Natural killer cell (primary cell): ENCODE measurements at regions of chr11 and their contacts with region 1.

Region 1: GRCh38 chr11:46121724-46122477 is 647 bp upstream of the PHF21A start:
- DNase-seq: peak; percentile 67 to 91
- ATAC-seq: peak; percentile 43 to 72 (median 60)
- H3K4me3 ChIP-seq: peak overlapping the region; percentile 47
- H3K4me3 Mint-ChIP-seq: peak overlapping the region; percentile 93
- H3K27ac ChIP-seq: peak overlapping the region; percentile 64
- H3K27ac Mint-ChIP-seq: peak overlapping the region; percentile 97 to 99
- H3K4me1 ChIP-seq: peaks cover 11% of the 10 kb centered on the region
- H3K4me1 Mint-ChIP-seq: peaks cover 32 to 35% of the 10 kb centered on the region in 2 donors
- H3K27me3 ChIP-seq: no peaks in the 10 kb centered on the region
- H3K27me3 Mint-ChIP-seq: no peaks in the 10 kb centered on the region
- CTCF ChIP-seq: no peak

Region 2: DNA sequence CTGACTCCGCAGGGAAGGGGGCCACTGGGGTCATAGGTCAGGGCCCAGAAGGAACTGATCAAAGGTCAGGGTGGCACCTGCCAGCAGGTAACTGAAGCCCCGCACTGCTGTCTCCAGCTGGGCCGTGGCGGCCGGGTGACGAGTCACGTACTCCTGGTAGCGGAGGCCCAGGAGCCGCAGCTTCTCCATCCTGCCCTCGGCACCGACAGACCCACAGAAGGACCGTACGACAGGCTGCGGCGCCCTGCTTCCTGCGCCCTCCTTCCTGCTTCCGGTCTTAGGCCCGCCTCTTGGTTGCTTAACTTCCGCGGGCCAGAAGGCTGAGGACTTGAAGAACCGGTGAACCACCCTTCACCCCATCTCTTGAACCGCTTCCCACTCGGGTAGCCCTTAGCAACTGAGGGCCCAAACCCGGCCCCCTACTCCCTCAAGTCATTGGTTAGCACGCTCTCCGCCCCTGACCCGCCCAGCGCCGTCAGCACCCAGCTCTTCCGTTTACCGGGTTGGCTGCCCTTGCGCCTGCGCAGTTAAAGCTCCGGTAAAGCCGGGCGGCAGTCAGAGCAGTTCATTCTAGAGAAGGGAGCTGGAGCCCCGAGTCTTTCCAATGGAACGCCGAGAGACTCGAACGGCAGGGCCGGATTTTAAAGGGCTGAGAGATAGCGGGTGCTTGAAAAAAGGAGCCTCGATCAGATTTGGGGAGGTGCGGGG is 204.1 kb before region 1 on chr11 and contains the start of gene PEX16:
- intact Hi-C with region 1: loop called (anchors 10 kb)
- DNase-seq: peak; percentile 92 to 99
- ATAC-seq: peak; percentile 88 to 97 (median 92)
- H3K4me3 ChIP-seq: peak within 1 kb of the TSS; percentile 85
- H3K4me3 Mint-ChIP-seq: peak within 1 kb of the TSS; percentile 97
- H3K27ac ChIP-seq: peak within 1 kb of the TSS; percentile 91
- H3K27ac Mint-ChIP-seq: peak within 1 kb of the TSS; percentile 96
- H3K4me1 ChIP-seq: peaks cover 52% of the 10 kb centered on the region
- H3K4me1 Mint-ChIP-seq: peaks cover 30 to 43% of the 10 kb centered on the region in 2 donors
- H3K27me3 ChIP-seq: peaks cover 3% of the 10 kb centered on the region
- H3K27me3 Mint-ChIP-seq: peaks cover 0 to 4% of the 10 kb centered on the region in 2 donors
- CTCF ChIP-seq: no peak
- total RNA-seq, gene PEX16: 61.3 to 75.8 (median 67.6) TPM

Region 3: DNA sequence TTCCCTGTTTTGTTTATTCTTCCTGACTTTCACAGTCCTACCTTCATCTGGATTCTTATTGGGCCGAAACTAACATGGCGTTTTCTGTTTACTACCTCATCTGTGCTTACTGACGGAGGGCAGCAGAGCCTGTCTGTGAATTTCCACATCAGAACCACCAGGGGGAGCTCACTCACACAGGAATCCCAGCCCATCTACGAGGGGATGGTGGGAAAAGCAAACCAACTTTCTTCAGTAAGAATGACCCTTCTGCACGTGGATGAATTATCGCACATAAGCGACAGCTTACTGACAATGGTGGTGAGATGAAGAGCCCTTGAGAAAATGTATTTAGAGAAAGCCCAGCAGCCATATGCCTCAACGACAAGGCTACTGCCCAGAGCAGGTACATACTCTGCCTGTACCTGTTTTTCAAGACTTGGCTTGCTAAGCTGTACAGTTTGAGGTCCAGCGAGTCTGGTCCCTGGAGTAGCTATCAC is 157.0 kb before region 1 on chr11:
- intact Hi-C with region 1: loop called (anchors 10 kb)
- DNase-seq: peak; percentile 36 to 90
- ATAC-seq: peak; percentile 88 to 99 (median 96)
- H3K4me3 ChIP-seq: no peak overlapping the region
- H3K4me3 Mint-ChIP-seq: no peak overlapping the region
- H3K27ac ChIP-seq: no peak overlapping the region
- H3K27ac Mint-ChIP-seq: no peak overlapping the region
- H3K4me1 ChIP-seq: no peaks in the 10 kb centered on the region
- H3K4me1 Mint-ChIP-seq: no peaks in the 10 kb centered on the region
- H3K27me3 ChIP-seq: no peaks in the 10 kb centered on the region
- H3K27me3 Mint-ChIP-seq: no peaks in the 10 kb centered on the region
- CTCF ChIP-seq: peak; percentile 91

Region 4: DNA sequence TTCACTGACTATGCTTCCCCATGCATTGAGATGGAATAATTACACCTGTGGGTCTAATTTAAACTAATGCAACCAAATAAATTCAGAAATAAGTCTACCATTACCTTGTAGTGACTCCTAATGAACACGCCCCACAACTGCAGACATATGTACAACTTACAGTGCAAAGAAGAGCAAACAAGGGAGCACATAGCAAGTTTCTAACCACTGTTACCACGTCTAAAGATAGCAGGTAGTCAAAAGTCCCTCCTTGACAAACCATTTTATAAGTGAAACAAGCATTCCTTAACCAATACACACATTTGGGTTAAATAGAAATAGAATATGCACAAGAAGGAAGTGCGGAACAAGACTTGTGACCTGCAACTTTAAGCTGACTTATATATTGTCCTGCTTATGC is 21.2 kb before region 1 on chr11:
- intact Hi-C with region 1: loop called (anchors 1 kb)
- DNase-seq: peak in 1 of 2 donors; percentile 47
- ATAC-seq: peak; percentile 82 to 88 (median 85)
- H3K4me3 ChIP-seq: peak overlapping the region; percentile 34
- H3K4me3 Mint-ChIP-seq: peak overlapping the region; percentile 87
- H3K27ac ChIP-seq: peak overlapping the region; percentile 85
- H3K27ac Mint-ChIP-seq: peak overlapping the region; percentile 88 to 97
- H3K4me1 ChIP-seq: peaks cover 13% of the 10 kb centered on the region
- H3K4me1 Mint-ChIP-seq: peaks cover 63 to 70% of the 10 kb centered on the region in 2 donors
- H3K27me3 ChIP-seq: no peaks in the 10 kb centered on the region
- H3K27me3 Mint-ChIP-seq: no peaks in the 10 kb centered on the region
- CTCF ChIP-seq: no peak

Region 5: DNA sequence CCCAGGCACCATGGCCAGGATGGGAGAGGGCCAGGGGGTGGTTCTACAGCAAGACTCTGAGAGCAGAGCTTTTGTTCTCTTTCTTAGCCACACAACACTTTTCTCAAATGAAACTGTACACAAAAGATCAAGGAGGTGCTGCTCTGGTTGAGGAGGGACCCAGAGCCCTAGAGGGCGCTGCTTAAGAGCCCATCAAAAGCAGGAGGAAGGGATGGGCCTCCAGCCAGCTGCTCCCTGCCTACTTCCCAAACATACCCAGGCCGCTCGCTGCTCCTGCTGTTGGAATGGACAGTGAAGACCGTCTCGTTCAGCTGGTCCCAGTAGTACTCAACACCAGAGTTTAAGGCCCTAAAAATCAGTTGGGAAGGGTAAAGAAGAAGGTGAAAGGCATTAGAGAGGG is 288.1 kb after region 1 on chr11:
- intact Hi-C with region 1: no loop called
- DNase-seq: no peak
- ATAC-seq: no peak
- H3K4me3 ChIP-seq: no peak overlapping the region
- H3K4me3 Mint-ChIP-seq: no peak overlapping the region
- H3K27ac ChIP-seq: no peak overlapping the region
- H3K27ac Mint-ChIP-seq: peak overlapping the region in 1 of 2 donors; percentile 48
- H3K4me1 ChIP-seq: no peaks in the 10 kb centered on the region
- H3K4me1 Mint-ChIP-seq: no peaks in the 10 kb centered on the region
- H3K27me3 ChIP-seq: no peaks in the 10 kb centered on the region
- H3K27me3 Mint-ChIP-seq: no peaks in the 10 kb centered on the region
- CTCF ChIP-seq: no peak